ENCODE measurements at regions of chr19 and their contacts with region 1.

Region 1: DNA sequence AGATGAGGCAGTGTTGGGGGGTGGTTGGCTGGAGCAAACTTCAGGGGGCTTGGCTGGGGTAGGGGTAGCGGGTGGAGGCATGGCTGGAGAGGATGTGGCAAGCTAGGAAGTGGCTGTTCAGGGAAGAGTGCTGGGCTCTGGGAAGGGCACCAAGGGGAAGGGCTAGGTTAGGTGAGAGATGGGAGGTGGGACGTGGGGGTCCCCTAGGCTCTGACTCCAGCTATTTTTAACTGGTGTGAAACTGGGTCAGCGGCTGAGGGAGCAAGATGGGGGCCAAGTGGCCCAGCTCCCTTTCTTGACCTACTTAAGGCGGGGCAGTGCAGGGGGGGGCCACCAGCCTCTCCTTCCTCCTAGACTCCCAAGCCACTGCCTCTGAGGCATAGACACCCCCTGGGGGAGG is 7.3 kb downstream of the KCNC3 start:
- DNase-seq: no peak
- H3K4me3 ChIP-seq: no peak overlapping the region
- H3K27ac ChIP-seq: no peak overlapping the region
- H3K4me1 ChIP-seq: peaks cover 6% of the 10 kb centered on the region
- H3K27me3 ChIP-seq: peaks cover 9% of the 10 kb centered on the region
- CTCF ChIP-seq: no peak

Region 2: DNA sequence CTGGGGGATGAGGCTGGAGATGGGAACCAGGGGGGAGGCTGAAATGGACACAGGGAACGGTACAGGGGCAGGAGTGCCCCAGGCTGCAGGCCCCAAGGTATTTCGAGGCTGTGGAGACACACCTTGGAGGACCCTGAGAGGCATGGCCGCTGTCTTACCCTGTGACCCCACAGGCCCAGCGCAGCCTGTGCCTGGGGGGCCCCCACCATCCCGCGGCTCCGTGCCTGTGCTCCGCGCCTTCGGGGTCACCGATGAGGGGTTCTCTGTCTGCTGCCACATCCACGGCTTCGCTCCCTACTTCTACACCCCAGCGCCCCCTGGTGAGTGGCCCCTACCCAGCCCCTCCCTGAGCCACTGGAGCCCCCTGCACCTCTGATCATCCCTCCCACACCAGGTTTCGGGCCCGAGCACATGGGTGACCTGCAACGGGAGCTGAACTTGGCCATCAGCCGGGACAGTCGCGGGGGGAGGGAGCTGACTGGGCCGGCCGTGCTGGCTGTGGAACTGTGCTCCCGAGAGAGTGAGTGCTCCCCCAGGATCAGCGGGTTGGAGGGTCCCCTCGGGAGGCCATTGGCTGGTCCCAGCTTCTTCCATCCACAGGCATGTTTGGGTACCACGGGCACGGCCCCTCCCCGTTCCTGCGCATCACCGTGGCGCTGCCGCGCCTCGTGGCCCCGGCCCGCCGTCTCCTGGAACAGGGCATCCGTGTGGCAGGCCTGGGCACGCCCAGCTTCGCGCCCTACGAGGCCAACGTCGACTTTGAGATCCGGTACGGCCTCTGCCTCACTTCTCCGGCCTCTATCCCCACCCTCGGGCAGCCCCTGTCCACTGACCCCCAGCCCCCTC is 80.0 kb after region 1 on chr19:
- CTCF ChIA-PET with region 1: no interaction called
- POLR2A ChIA-PET with region 1: interaction called, 12 read pairs
- intact Hi-C with region 1: no loop called
- DNase-seq: no peak
- H3K4me3 ChIP-seq: no peak overlapping the region
- H3K27ac ChIP-seq: no peak overlapping the region
- H3K4me1 ChIP-seq: no peaks in the 10 kb centered on the region
- H3K27me3 ChIP-seq: no peaks in the 10 kb centered on the region
- CTCF ChIP-seq: no peak